ENCODE measurements at regions of chr13 and their contacts with region 1.

Region 1: GRCh38 chr13:70668283-70668682 is 560.0 kb upstream of the KLHL1 start:
- DNase-seq: peak; percentile 87
- ATAC-seq: peak; percentile 85
- H3K4me3 ChIP-seq: peak overlapping the region; percentile 39; the same call in 1 of the 2 replicates
- H3K27ac ChIP-seq: peak overlapping the region; percentile 91
- H3K4me1 ChIP-seq: peaks cover 26% of the 10 kb centered on the region
- H3K27me3 ChIP-seq: no peaks in the 10 kb centered on the region
- CTCF ChIP-seq: no peak

Region 2: GRCh38 chr13:70448820-70449219 is 219.5 kb before region 1 on chr13:
- CTCF ChIA-PET with region 1: no interaction called
- POLR2A ChIA-PET with region 1: no interaction called
- intact Hi-C with region 1: no loop called
- DNase-seq: no peak
- ATAC-seq: no peak
- H3K4me3 ChIP-seq: no peak overlapping the region
- H3K27ac ChIP-seq: no peak overlapping the region
- H3K4me1 ChIP-seq: no peaks in the 10 kb centered on the region
- H3K27me3 ChIP-seq: no peaks in the 10 kb centered on the region
- CTCF ChIP-seq: no peak

Region 3: DNA sequence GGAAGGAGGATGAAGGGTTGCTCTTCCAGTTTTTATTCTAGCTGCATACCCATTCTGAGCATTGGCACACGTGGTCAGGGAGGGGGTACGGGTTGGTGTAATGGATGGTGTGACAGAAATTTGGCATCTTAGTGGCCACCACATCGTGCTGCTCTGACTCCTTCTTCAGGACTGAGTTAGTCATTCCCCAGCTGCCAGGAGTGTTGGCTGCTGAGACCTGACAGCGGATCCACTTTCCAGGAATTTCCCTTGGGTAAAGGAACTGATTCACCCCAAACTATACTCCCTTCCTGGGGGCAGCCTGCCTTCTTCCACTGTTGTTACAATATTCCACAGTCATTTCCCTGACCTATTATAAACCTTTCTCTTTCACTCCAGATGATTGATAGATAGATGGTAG is 35.5 kb after region 1 on chr13:
- CTCF ChIA-PET with region 1: no interaction called
- POLR2A ChIA-PET with region 1: no interaction called
- intact Hi-C with region 1: loop called (anchors 5 kb)
- DNase-seq: peak; percentile 79
- ATAC-seq: peak; percentile 89
- H3K4me3 ChIP-seq: no peak overlapping the region
- H3K27ac ChIP-seq: peak overlapping the region; percentile 84
- H3K4me1 ChIP-seq: peaks cover 33% of the 10 kb centered on the region
- H3K27me3 ChIP-seq: no peaks in the 10 kb centered on the region
- CTCF ChIP-seq: no peak

Region 4: DNA sequence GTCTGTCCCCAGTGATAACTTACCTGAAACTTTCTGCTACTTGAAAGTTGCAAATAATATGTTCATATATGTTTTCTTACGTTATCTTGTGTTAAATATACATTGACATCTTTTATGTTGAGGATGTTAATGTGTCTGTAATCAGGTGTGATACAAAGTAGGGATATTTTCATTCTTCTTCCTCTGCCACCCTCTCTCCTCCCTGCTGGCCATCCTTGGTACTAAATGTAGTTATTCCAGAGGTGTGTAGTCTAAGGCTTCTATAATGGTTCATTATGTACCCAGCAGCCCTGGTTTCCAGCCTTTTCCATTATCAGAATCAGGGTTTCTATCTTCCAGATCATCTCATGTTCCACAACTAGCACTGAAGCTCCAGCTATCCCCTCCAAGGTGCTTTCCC is 46.7 kb after region 1 on chr13:
- CTCF ChIA-PET with region 1: no interaction called
- POLR2A ChIA-PET with region 1: no interaction called
- intact Hi-C with region 1: no loop called
- DNase-seq: no peak
- ATAC-seq: 0 out of 2 replicates have a peak, but pooled peaks have one; percentile 27
- H3K4me3 ChIP-seq: no peak overlapping the region
- H3K27ac ChIP-seq: no peak overlapping the region
- H3K4me1 ChIP-seq: no peaks in the 10 kb centered on the region
- H3K27me3 ChIP-seq: no peaks in the 10 kb centered on the region
- CTCF ChIP-seq: no peak; the same call in 1 of the 2 replicates